A549 (cell line): ENCODE measurements at regions of chr2 and their contacts with region 1.

Region 1: DNA sequence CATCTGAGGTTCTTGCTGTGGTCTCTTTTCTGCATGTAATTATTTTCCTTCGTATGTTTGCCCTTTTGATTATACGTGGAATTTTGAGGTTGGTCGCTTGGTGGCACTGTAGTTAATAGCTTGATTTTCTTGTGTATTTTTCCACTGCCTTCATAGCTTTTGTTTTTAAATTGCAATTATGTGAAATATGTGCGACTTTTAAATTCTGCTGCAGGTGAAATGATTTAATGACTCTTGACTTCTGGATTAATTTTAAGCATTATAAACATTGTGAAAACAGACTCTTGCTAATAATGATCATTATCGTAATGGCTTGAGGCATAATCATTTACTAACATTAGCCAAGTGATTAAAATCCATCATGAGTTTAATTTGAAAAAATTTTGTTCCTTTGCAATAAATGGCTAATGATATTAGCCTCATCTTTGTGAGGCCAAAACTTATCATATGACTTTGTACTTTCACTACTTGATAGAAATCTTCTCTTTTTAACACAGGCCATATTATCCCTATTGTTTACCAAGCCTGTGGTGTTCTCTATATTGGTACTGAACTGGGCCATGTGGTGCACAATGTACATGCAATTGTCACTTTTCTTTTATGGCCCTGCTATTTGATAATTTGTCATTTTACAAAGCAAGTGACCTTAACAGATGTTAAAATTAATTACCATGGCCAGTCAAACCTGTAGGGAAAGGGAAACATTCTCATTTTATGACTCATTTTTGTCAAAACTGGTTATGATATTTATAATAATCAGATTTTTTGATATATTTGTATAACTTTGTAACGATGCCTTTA is 62.8 kb upstream of the NEUROD1 start:
- DNase-seq: peak; percentile 7 to 65
- ATAC-seq: peak; percentile 54 to 67; a peak in 2 of 6 replicates
- H3K4me3 ChIP-seq: no peak overlapping the region
- H3K27ac ChIP-seq: 0 out of 6 replicates have a peak overlapping the region, but pooled peaks of 1 of the 2 experiments have one; percentile 29
- H3K4me1 ChIP-seq: peaks cover 9% of the 10 kb centered on the region; the same call in 2 of the 3 replicates
- CTCF ChIP-seq: peak; percentile 84
- EP300 ChIP-seq: no peak
- POLR2A ChIP-seq: no peak
- RAD21 ChIP-seq: peak; percentile 87 to 93

Region 2: DNA sequence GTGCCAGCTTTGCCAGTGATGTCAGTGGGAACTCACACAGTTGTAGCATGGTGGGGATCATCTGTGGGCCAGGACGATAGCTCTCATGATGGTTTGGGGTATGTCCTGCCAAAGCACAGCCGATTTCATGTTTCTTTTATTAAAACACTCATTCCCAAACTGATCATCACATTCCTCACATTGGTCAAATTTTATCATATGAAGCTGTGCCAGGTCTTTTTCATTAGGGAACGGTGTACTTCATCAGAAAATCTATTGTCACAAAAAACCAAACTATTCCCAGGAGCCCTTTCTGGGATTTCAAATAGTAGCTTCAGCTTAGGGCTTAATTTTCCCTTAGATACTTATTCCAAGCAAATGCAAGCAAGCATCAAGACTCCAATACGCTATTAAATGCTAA is 243.9 kb before region 1 on chr2:
- CTCF ChIA-PET with region 1: no interaction called
- POLR2A ChIA-PET with region 1: no interaction called
- DNase-seq: no peak
- ATAC-seq: no peak
- H3K4me3 ChIP-seq: no peak overlapping the region
- H3K27ac ChIP-seq: no peak overlapping the region
- H3K4me1 ChIP-seq: no peaks in the 10 kb centered on the region
- CTCF ChIP-seq: no peak
- EP300 ChIP-seq: no peak
- POLR2A ChIP-seq: no peak
- RAD21 ChIP-seq: no peak

Region 3: GRCh38 chr2:181798022-181798421 is 54.9 kb after region 1 on chr2:
- CTCF ChIA-PET with region 1: no interaction called
- POLR2A ChIA-PET with region 1: no interaction called
- DNase-seq: no peak
- ATAC-seq: no peak
- H3K4me3 ChIP-seq: no peak overlapping the region
- H3K27ac ChIP-seq: no peak overlapping the region
- H3K4me1 ChIP-seq: no peaks in the 10 kb centered on the region
- CTCF ChIP-seq: no peak
- EP300 ChIP-seq: no peak
- POLR2A ChIP-seq: no peak
- RAD21 ChIP-seq: no peak

Region 4: GRCh38 chr2:181891258-181891965 is 148.3 kb after region 1 on chr2 and contains the start of gene ITPRID2:
- CTCF ChIA-PET with region 1: interaction called, 15 read pairs
- POLR2A ChIA-PET with region 1: no interaction called
- DNase-seq: peak; percentile 69 to 91
- ATAC-seq: peak; percentile 93 to 95
- H3K4me3 ChIP-seq: peak within 1 kb of the TSS; percentile 89
- H3K27ac ChIP-seq: peak within 1 kb of the TSS; percentile 97 to 98
- H3K4me1 ChIP-seq: peaks cover 57% of the 10 kb centered on the region
- CTCF ChIP-seq: no peak; the same call in 2 of the 3 replicates
- EP300 ChIP-seq: no peak
- POLR2A ChIP-seq: peak; percentile 64
- RAD21 ChIP-seq: 0 out of 5 replicates have a peak, but pooled peaks of 1 of the 2 experiments have one; percentile 20
- polyA plus RNA-seq, gene ITPRID2: 87.7 and 94.3 TPM in 2 replicates

Region 5: DNA sequence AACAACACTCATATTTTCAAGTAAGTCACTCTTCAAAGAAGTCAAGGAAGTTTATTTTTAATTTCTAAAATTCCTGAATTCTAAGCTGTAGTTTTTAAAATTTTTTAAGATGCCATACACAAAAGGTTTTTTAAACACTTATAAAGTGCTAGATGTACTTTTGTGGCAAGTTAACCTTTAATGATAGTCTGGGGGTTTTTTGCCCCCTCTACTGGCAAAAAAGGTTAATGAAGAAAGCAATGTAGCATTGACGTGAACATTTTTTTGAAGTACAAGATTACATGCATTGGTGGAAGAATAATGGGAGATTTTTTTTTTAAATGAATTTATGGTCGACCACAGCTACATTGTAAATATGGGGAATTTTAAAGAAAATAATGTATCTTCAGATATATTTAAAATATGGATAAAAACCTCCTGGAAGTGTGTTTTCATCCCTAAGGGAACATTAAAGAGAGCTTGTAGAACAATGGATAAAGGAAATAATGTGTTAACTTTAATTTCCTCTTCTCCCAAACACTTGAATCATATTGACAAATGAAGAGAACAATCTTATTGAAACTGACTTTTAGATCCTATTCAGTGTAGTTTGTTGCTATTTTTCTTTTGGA is 161.0 kb after region 1 on chr2:
- CTCF ChIA-PET with region 1: interaction called, 33 read pairs
- POLR2A ChIA-PET with region 1: no interaction called
- DNase-seq: peak; percentile 15 to 39
- ATAC-seq: peak in 1 of 2 experiments; percentile 74; a peak in 3 of 6 replicates
- H3K4me3 ChIP-seq: no peak overlapping the region
- H3K27ac ChIP-seq: no peak overlapping the region
- H3K4me1 ChIP-seq: peaks cover 21% of the 10 kb centered on the region
- CTCF ChIP-seq: peak; percentile 71
- EP300 ChIP-seq: no peak
- POLR2A ChIP-seq: no peak
- RAD21 ChIP-seq: peak; percentile 70 to 75